ENCODE measurements at regions of chrX and their contacts with region 1.

Region 1: GRCh38 chrX:135477576-135477975 is 42.9 kb upstream of the INTS6L start:
- DNase-seq: peak; percentile 63
- ATAC-seq: peak; percentile 77
- H3K4me3 Mint-ChIP-seq: no peak overlapping the region
- H3K27ac Mint-ChIP-seq: no peak overlapping the region
- H3K4me1 Mint-ChIP-seq: peaks cover 2% of the 10 kb centered on the region
- H3K27me3 Mint-ChIP-seq: no peaks in the 10 kb centered on the region

Region 2: DNA sequence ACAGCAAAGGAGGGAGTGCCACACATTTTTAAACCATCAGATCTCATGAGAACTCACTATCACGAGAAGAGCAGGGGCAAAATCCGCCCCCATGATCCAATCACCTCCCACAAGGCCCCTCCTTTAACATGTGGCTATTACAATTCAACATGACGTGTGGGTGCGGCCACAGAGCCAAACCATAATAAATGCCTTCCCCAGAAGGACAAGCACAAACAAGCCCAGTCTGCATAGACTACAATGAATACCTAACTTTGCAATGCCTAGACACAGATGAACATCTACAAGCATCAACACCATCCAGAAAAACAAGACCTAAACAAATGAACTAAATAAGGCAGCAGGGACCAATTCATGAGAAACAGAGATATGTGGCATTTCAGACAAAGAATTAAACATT is 213.4 kb before region 1 on chrX:
- CTCF ChIA-PET with region 1: no interaction called
- POLR2A ChIA-PET with region 1: no interaction called
- intact Hi-C with region 1: no loop called
- DNase-seq: no peak
- ATAC-seq: no peak
- H3K4me3 Mint-ChIP-seq: no peak overlapping the region
- H3K27ac Mint-ChIP-seq: no peak overlapping the region
- H3K4me1 Mint-ChIP-seq: no peaks in the 10 kb centered on the region
- H3K27me3 Mint-ChIP-seq: peaks cover 3% of the 10 kb centered on the region

Region 3: GRCh38 chrX:135345107-135345589 is 132.4 kb before region 1 on chrX:
- CTCF ChIA-PET with region 1: no interaction called
- POLR2A ChIA-PET with region 1: no interaction called
- intact Hi-C with region 1: loop called in 1 of 2 experiments (anchors 5 kb)
- DNase-seq: peak; percentile 4
- ATAC-seq: no peak
- H3K4me3 Mint-ChIP-seq: peak overlapping the region; percentile 72
- H3K27ac Mint-ChIP-seq: peak overlapping the region; percentile 85
- H3K4me1 Mint-ChIP-seq: peaks cover 36% of the 10 kb centered on the region
- H3K27me3 Mint-ChIP-seq: no peaks in the 10 kb centered on the region

Region 4: GRCh38 chrX:135411893-135412292 is 65.7 kb before region 1 on chrX:
- CTCF ChIA-PET with region 1: no interaction called
- POLR2A ChIA-PET with region 1: no interaction called
- intact Hi-C with region 1: no loop called
- DNase-seq: no peak
- ATAC-seq: no peak
- H3K4me3 Mint-ChIP-seq: no peak overlapping the region
- H3K27ac Mint-ChIP-seq: no peak overlapping the region
- H3K4me1 Mint-ChIP-seq: peaks cover 4% of the 10 kb centered on the region
- H3K27me3 Mint-ChIP-seq: no peaks in the 10 kb centered on the region